Endothelial cell of umbilical vein (primary cell): ENCODE measurements at regions of chr6 and their contacts with region 1.

Region 1: GRCh38 chr6:32933636-32934085 is 7.2 kb downstream of the HLA-DMB start:
- DNase-seq: peak; percentile 76
- H3K4me3 ChIP-seq: no peak overlapping the region
- H3K27ac ChIP-seq: no peak overlapping the region
- H3K4me1 ChIP-seq: no peaks in the 10 kb centered on the region
- H3K27me3 ChIP-seq: peaks cover 41 to 73% of the 10 kb centered on the region in 2 experiments
- CTCF ChIP-seq: peak; percentile 73
- POLR2A ChIP-seq: no peak

Region 2: DNA sequence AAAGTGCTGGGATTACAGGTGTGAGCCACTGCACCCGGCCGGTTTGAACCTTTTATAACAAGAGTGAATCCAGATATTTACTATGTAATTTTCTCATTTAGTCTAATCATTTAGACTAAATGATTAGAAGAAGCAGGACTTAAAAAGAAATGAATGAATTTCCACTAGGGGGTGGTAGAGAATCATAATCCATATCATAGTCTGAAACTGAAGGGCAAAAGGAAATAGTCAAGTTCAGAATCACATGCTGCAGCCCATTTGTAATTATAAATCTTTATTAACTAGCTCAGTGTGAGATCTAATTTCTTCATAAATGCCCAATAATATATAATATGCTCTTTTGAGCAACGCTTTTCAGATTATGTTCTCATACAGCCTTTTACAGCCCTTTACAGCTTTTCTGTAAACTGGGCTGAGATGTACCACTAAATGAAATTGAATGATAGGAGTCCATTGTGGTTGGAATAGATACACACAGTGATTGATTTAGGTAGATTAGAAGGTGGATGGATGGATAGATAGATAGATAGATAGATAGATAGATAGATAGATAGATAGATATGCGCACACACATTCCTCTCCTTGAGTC is 47.9 kb before region 1 on chr6:
- CTCF ChIA-PET with region 1: interaction called, 37 read pairs
- POLR2A ChIA-PET with region 1: no interaction called
- dilution Hi-C with region 1: no loop called
- intact Hi-C with region 1: loop called (anchors 5 kb)
- DNase-seq: peak; percentile 72
- H3K4me3 ChIP-seq: no peak overlapping the region
- H3K27ac ChIP-seq: no peak overlapping the region
- H3K4me1 ChIP-seq: peaks cover under 1% of the 10 kb centered on the region
- H3K27me3 ChIP-seq: peaks cover 28 to 30% of the 10 kb centered on the region in 2 experiments
- CTCF ChIP-seq: peak; percentile 34
- POLR2A ChIP-seq: no peak

Region 3: GRCh38 chr6:32905078-32905477 is 28.6 kb before region 1 on chr6:
- CTCF ChIA-PET with region 1: interaction called, 15 read pairs
- POLR2A ChIA-PET with region 1: no interaction called
- dilution Hi-C with region 1: no loop called
- intact Hi-C with region 1: no loop called
- DNase-seq: no peak
- H3K4me3 ChIP-seq: no peak overlapping the region
- H3K27ac ChIP-seq: no peak overlapping the region
- H3K4me1 ChIP-seq: no peaks in the 10 kb centered on the region
- H3K27me3 ChIP-seq: no peaks in the 10 kb centered on the region
- CTCF ChIP-seq: no peak
- POLR2A ChIP-seq: no peak

Region 4: GRCh38 chr6:32920715-32921114 is 12.9 kb before region 1 on chr6:
- CTCF ChIA-PET with region 1: interaction called, 33 read pairs
- POLR2A ChIA-PET with region 1: no interaction called
- dilution Hi-C with region 1: no loop called
- intact Hi-C with region 1: no loop called
- DNase-seq: no peak
- H3K4me3 ChIP-seq: no peak overlapping the region
- H3K27ac ChIP-seq: no peak overlapping the region
- H3K4me1 ChIP-seq: no peaks in the 10 kb centered on the region
- H3K27me3 ChIP-seq: peaks cover 4 to 9% of the 10 kb centered on the region in 2 experiments
- CTCF ChIP-seq: no peak
- POLR2A ChIP-seq: no peak

Region 5: GRCh38 chr6:32952817-32953739 is 19.4 kb after region 1 on chr6 and contains the start of gene HLA-DMA:
- CTCF ChIA-PET with region 1: interaction called, 174 read pairs
- POLR2A ChIA-PET with region 1: interaction called, 4 read pairs
- dilution Hi-C with region 1: no loop called
- intact Hi-C with region 1: no loop called
- DNase-seq: peak; percentile 96
- H3K4me3 ChIP-seq: no peak within 1 kb of the TSS
- H3K27ac ChIP-seq: no peak within 1 kb of the TSS
- H3K4me1 ChIP-seq: no peaks in the 10 kb centered on the region
- H3K27me3 ChIP-seq: no peaks in the 10 kb centered on the region
- CTCF ChIP-seq: peak; percentile 80 to 81
- POLR2A ChIP-seq: no peak
- total RNA-seq, gene HLA-DMA: 0.53 and 1.2 TPM in 2 replicates

Region 6: DNA sequence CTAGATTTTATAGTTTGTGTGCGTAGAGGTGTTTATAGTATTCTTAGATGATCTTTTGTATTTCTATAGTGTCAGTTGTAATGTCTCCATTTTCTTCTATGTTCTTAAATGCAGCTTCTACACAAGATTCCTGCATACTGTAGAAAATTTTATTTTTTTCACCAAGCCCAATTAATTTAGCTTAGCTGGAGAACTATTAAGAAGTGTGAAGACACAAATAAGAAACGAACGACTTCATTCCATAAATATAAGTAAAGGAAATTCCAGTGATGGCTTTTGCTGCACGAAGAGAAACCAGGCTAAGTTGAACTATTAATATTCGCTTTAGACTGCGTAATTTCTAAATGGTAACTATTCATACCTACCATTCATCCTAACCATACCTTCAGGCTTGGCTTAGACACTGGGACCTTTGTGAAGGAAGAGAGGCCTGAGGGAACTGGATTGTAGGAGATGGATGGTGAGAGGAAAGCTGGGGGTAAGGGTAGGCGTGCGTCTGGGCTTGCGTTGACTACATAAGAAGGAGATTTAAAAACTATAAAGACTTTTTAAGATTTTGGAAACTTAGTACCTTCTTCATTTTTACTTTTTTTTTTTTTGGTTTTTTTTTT is 59.8 kb after region 1 on chr6:
- CTCF ChIA-PET with region 1: interaction called, 580 read pairs
- POLR2A ChIA-PET with region 1: no interaction called
- dilution Hi-C with region 1: no loop called
- intact Hi-C with region 1: no loop called
- DNase-seq: peak; percentile 56
- H3K4me3 ChIP-seq: no peak overlapping the region
- H3K27ac ChIP-seq: no peak overlapping the region
- H3K4me1 ChIP-seq: peaks cover 11% of the 10 kb centered on the region
- H3K27me3 ChIP-seq: peaks cover 4 to 11% of the 10 kb centered on the region in 2 experiments
- CTCF ChIP-seq: no peak
- POLR2A ChIP-seq: no peak